H1 (cell line): ENCODE measurements at regions of chr14 and their contacts with region 1.

Region 1: GRCh38 chr14:54829455-54830224 is 73.0 kb downstream of the GCH1 start:
- DNase-seq: no peak
- H3K4me3 ChIP-seq: no peak overlapping the region
- H3K27ac ChIP-seq: no peak overlapping the region
- H3K4me1 ChIP-seq: no peaks in the 10 kb centered on the region
- H3K27me3 ChIP-seq: no peaks in the 10 kb centered on the region
- CTCF ChIP-seq: no peak
- EP300 ChIP-seq: no peak
- POLR2A ChIP-seq: no peak
- RAD21 ChIP-seq: no peak

Region 2: GRCh38 chr14:54818201-54819133 is 11.2 kb before region 1 on chr14:
- CTCF ChIA-PET with region 1: interaction called, 17 read pairs
- POLR2A ChIA-PET with region 1: interaction called, 4 read pairs
- DNase-seq: no peak
- H3K4me3 ChIP-seq: no peak overlapping the region
- H3K27ac ChIP-seq: no peak overlapping the region
- H3K4me1 ChIP-seq: no peaks in the 10 kb centered on the region
- H3K27me3 ChIP-seq: no peaks in the 10 kb centered on the region
- CTCF ChIP-seq: no peak
- EP300 ChIP-seq: no peak
- POLR2A ChIP-seq: no peak
- RAD21 ChIP-seq: no peak

Region 3: DNA sequence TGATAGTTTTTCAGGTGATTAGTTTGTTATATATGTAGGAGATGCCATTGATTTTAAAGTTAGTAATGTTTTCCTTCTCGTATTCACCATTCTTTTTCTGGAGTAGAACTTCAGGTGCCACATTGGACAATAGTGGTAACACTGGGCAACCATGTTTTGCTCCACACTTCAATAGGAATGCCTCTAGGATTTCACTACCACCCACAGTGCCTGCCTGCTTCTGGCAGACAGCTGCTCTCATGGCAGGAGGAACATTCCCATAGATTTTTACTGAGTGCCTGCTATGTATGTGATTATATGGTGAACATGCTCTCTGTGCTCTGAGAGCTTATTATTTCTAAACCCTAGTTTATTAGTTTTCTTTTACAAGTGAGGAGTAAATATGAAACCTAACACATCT is 19.3 kb after region 1 on chr14:
- CTCF ChIA-PET with region 1: no interaction called
- POLR2A ChIA-PET with region 1: no interaction called
- DNase-seq: no peak
- H3K4me3 ChIP-seq: no peak overlapping the region
- H3K27ac ChIP-seq: no peak overlapping the region
- H3K4me1 ChIP-seq: no peaks in the 10 kb centered on the region; a peak in 1 of 7 replicates
- H3K27me3 ChIP-seq: no peaks in the 10 kb centered on the region
- CTCF ChIP-seq: no peak
- EP300 ChIP-seq: no peak
- POLR2A ChIP-seq: no peak
- RAD21 ChIP-seq: no peak

Region 4: GRCh38 chr14:54877015-54877702 is 47.5 kb after region 1 on chr14:
- CTCF ChIA-PET with region 1: no interaction called
- POLR2A ChIA-PET with region 1: no interaction called
- DNase-seq: no peak
- H3K4me3 ChIP-seq: no peak overlapping the region
- H3K27ac ChIP-seq: no peak overlapping the region
- H3K4me1 ChIP-seq: peaks cover 0 to 6% (median 0%) of the 10 kb centered on the region in 4 experiments; a peak in 3 of 7 replicates
- H3K27me3 ChIP-seq: no peaks in the 10 kb centered on the region
- CTCF ChIP-seq: no peak
- EP300 ChIP-seq: no peak
- POLR2A ChIP-seq: no peak
- RAD21 ChIP-seq: no peak